ENCODE measurements at regions of chr10 and their contacts with region 1.

Region 1: DNA sequence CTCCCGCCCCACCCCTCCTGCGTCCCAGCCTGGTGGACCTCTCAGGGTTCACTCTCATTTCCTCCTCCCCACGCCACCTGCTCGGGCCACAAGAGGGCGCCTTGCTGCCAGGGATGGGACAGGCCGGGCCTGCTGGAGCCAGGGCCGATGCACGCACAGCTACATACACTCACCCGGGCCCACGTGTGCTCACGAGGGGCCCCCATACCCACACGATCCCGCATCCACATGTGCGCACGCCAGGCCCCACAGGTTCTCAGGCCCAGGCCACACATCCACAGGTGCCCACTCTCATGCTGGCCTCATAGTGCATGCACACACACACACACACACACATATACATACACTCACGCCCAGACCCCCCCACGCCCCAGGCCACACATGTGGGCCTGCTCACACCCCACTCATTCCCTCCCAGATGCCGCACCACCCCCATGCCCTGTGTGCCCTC is 68.6 kb downstream of the LHPP start:
- DNase-seq: peak; percentile 82 to 86 (median 83)
- ATAC-seq: peak; percentile 96
- H3K4me3 ChIP-seq: no peak overlapping the region
- H3K27ac ChIP-seq: no peak overlapping the region
- H3K4me1 ChIP-seq: peaks cover 3 to 52% of the 10 kb centered on the region in 2 experiments; a peak in 4 of 5 replicates
- H3K27me3 ChIP-seq: no peaks in the 10 kb centered on the region
- CTCF ChIP-seq: peak; percentile 72 to 88 (median 83)
- EP300 ChIP-seq: no peak
- POLR2A ChIP-seq: no peak
- RAD21 ChIP-seq: peak; percentile 70 to 88

Region 2: DNA sequence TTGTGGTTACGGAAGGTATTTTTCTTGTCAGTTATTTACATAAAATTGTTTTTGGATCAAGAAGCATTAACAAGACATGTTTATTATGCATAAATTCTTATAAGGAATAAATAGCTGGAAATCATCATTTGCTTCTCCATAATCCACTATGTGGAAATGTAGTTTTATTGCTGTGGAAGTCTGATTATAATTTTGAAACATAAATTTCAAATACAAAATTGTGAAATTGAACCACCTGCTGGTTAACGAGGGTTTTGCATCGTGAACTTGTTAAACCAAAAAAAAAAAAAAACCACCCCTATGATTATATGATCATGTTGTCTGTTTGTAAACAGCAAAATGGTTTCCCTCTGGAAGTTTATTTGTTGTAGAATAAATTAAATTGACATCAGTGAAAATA is 297.2 kb after region 1 on chr10:
- CTCF ChIA-PET with region 1: no interaction called
- POLR2A ChIA-PET with region 1: no interaction called
- in situ Hi-C with region 1: no loop called
- intact Hi-C with region 1: loop called (anchors 10 kb)
- DNase-seq: peak; percentile 4 to 28 (median 18)
- ATAC-seq: no peak
- H3K4me3 ChIP-seq: no peak overlapping the region
- H3K27ac ChIP-seq: no peak overlapping the region
- H3K4me1 ChIP-seq: no peaks in the 10 kb centered on the region
- H3K27me3 ChIP-seq: no peaks in the 10 kb centered on the region
- CTCF ChIP-seq: peak in 1 of 3 experiments; percentile 46; a peak in 2 of 6 replicates
- EP300 ChIP-seq: no peak
- POLR2A ChIP-seq: no peak
- RAD21 ChIP-seq: peak in 1 of 2 experiments; percentile 37; a peak in 2 of 4 replicates